Dorsolateral prefrontal cortex (tissue), 120 donors: ENCODE measurements at regions of chr1 and their contacts with region 1.

Region 1: DNA sequence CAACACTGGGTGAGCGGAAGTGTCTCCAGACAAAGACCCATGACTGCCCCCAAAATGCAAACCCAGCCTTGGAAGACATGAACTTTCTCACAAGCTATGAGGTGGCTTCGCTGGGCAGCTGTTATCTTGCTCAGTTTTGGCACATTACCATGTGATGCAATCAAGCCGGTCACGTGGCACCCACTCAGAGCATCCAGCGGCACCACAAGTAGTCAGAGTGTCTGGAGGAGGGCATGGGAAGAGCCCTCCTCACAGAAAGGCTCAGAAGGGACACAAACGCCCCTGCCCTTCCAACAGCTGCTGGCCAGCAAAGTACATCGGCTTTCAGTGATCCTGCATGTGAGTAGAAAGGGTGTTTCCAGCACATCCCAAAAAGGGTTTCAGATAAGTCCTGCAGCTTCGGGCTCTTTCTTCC is 145.5 kb upstream of the IRF2BP2 start:
- DNase-seq: peak in 9 of 10 donors; percentile 80 to 95 (median 84)
- H3K4me3 ChIP-seq: peak overlapping the region in 20 of 59 donors; percentile 10 to 53 (median 26)
- H3K27ac ChIP-seq: peak overlapping the region in 37 of 59 donors; percentile 6 to 79 (median 55)
- H3K27me3 ChIP-seq: no peaks in the 10 kb centered on the region
- CTCF ChIP-seq: peak in 2 of 56 donors; percentile 6 to 13

Region 2: GRCh38 chr1:234631721-234632125 is 123.7 kb before region 1 on chr1:
- intact Hi-C with region 1: no loop called
- DNase-seq: no peak
- H3K4me3 ChIP-seq: no peak overlapping the region
- H3K27ac ChIP-seq: no peak overlapping the region
- H3K27me3 ChIP-seq: no peaks in the 10 kb centered on the region
- CTCF ChIP-seq: no peak

Region 3: GRCh38 chr1:234730770-234731568 is 24.5 kb before region 1 on chr1:
- intact Hi-C with region 1: no loop called
- DNase-seq: no peak
- H3K4me3 ChIP-seq: no peak overlapping the region
- H3K27ac ChIP-seq: peak overlapping the region in 24 of 59 donors; percentile 1 to 98 (median 38)
- H3K27me3 ChIP-seq: no peaks in the 10 kb centered on the region
- CTCF ChIP-seq: no peak

Region 4: GRCh38 chr1:234833646-234834045 is 78.2 kb after region 1 on chr1:
- intact Hi-C with region 1: loop called (anchors 5 kb)
- DNase-seq: no peak
- H3K4me3 ChIP-seq: no peak overlapping the region
- H3K27ac ChIP-seq: no peak overlapping the region
- H3K27me3 ChIP-seq: no peaks in the 10 kb centered on the region
- CTCF ChIP-seq: no peak

Region 5: GRCh38 chr1:234839663-234840062 is 84.2 kb after region 1 on chr1:
- intact Hi-C with region 1: loop called (anchors 5 kb)
- DNase-seq: no peak
- H3K4me3 ChIP-seq: no peak overlapping the region
- H3K27ac ChIP-seq: peak overlapping the region in 8 of 59 donors; percentile 10 to 83 (median 72)
- H3K27me3 ChIP-seq: no peaks in the 10 kb centered on the region
- CTCF ChIP-seq: no peak

Region 6: DNA sequence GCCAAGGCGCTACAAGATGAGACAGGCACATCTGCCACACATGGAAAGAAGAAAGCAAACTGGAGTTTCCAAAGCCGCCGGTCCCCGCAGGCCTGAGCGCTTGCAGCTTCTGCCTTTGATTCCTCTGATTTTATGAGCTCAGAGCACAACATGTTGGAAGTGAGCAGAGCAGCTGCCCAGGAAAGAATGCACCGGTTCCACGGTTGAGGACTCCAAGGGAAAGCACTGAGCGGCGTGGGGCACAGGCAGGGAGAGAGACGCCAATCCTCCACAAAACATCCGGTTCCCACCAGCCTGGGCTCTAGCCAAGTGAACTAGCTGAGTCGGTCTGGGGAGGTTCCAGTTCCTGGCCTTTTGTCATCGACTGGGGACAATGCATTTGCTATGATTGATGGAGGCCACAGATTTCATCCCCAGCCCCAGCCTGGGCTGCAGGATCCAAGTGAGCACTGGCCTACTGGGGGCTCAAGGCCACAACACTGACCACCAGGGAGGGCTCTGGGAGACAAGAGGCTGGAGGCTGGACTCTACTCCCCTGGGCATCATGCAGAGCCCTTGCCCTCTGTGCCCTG is 107.6 kb after region 1 on chr1:
- intact Hi-C with region 1: loop called in 1 of 2 experiments (anchors 5 kb)
- DNase-seq: peak; percentile 52 to 81 (median 71)
- H3K4me3 ChIP-seq: peak overlapping the region in 49 of 59 donors; percentile 0 to 60 (median 29)
- H3K27ac ChIP-seq: peak overlapping the region; percentile 28 to 91 (median 83)
- H3K27me3 ChIP-seq: no peaks in the 10 kb centered on the region
- CTCF ChIP-seq: peak in 2 of 56 donors; percentile 12 to 18